HAP-1 (cell line): ENCODE measurements at regions of chr16 and their contacts with region 1.

Region 1: DNA sequence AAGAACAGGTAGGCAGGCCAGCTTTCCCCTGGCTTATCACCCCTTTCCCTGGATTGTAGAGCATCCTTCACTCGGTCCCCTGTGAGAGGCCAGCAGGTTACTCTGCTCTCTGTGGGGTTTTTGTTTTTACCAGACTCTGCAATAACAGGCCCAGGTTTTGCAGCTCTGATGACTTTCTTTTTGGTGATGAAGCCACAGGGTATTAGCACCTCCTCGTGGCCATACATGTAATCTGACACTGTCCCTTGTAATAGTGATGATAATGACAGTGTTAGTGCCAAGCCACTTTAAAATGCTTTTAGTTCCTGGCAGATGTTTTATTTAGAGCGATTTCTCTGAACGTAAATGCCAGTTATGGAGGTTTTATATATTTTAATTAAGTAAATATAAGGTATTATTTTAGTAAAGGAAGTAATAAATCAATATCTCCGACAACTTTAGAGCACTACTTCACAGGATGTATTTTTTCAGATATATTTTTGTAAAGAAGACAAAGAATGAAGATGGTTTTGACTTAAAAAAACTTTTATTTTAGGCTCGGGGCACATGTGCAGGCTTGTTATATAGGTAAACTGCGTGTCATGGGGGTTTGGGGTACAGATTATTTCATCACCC is 38.0 kb upstream of the CPHXL start:
- DNase-seq: peak; percentile 53 to 60
- H3K4me3 ChIP-seq: no peak overlapping the region
- H3K4me1 ChIP-seq: no peaks in the 10 kb centered on the region
- H3K27me3 ChIP-seq: 0 out of 2 replicates have a peak, but pooled peaks cover 3% of the 10 kb centered on the region

Region 2: GRCh38 chr16:74896389-74897240 is 867.6 kb before region 1 on chr16:
- in situ Hi-C with region 1: no loop called
- DNase-seq: no peak
- H3K4me3 ChIP-seq: no peak overlapping the region
- H3K4me1 ChIP-seq: no peaks in the 10 kb centered on the region
- H3K27me3 ChIP-seq: no peaks in the 10 kb centered on the region

Region 3: GRCh38 chr16:75198135-75198600 is 566.1 kb before region 1 on chr16:
- in situ Hi-C with region 1: loop called (anchors 10 kb)
- DNase-seq: no peak
- H3K4me3 ChIP-seq: no peak overlapping the region
- H3K4me1 ChIP-seq: no peaks in the 10 kb centered on the region
- H3K27me3 ChIP-seq: peaks cover 15% of the 10 kb centered on the region

Region 4: GRCh38 chr16:75471723-75472633 is 292.3 kb before region 1 on chr16:
- in situ Hi-C with region 1: loop called (anchors 5 kb)
- DNase-seq: peak; percentile 70 to 75
- H3K4me3 ChIP-seq: no peak overlapping the region
- H3K4me1 ChIP-seq: peaks cover 14% of the 10 kb centered on the region
- H3K27me3 ChIP-seq: no peaks in the 10 kb centered on the region